ENCODE measurements at regions of chr9 and their contacts with region 1.

Region 1: GRCh38 chr9:120875954-120876841 is 790 bp downstream of the PHF19 start:
- DNase-seq: peak; percentile 96
- H3K4me3 Mint-ChIP-seq: peak overlapping the region; percentile 97
- H3K27ac Mint-ChIP-seq: peak overlapping the region; percentile 97
- H3K4me1 Mint-ChIP-seq: peaks cover 73% of the 10 kb centered on the region
- H3K27me3 Mint-ChIP-seq: no peaks in the 10 kb centered on the region

Region 2: DNA sequence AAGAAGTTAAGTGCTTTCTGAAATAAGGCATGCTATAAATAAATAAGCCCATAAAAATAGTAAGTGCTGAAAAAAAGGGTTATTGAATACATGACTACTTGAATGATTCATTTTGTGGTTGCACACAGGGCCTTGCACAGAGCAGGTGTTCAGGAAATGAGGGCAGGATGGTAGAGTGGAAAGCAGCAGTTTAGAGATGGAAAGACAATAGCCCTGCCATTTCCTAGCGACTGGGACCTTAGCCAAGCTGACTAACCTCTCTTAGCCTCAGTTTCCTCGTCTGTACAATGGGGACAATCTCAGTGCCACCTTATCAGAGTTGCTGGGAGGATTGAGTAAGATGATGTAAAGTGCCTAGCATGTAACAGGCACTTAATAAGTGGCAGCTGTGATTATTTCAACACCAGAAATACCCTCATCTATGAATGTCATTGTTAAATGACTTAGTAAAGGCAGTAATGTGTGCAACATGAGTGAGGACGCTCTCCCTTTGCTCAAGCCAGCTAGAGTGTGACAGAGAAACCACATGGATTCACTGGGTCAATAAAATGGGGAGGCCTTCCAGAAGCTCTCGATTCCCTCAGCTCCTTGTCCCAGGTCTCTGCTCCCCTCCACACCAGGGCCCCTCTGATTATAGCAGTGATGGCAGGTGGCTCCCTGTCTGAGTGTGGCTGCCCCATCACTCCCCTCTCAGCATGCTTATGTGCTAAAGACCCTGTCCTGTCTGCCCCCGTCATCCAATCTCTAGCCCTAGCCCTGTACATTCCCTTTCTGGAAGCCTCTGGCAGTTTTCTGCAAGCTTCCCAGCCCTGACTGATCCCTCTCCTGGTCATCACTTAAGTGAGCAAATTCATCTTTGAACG is 16.8 kb after region 1 on chr9:
- intact Hi-C with region 1: loop called (anchors 1 kb)
- DNase-seq: peak; percentile 90
- H3K4me3 Mint-ChIP-seq: peak overlapping the region; percentile 85
- H3K27ac Mint-ChIP-seq: peak overlapping the region; percentile 99
- H3K4me1 Mint-ChIP-seq: peaks cover 79% of the 10 kb centered on the region
- H3K27me3 Mint-ChIP-seq: no peaks in the 10 kb centered on the region

Region 3: DNA sequence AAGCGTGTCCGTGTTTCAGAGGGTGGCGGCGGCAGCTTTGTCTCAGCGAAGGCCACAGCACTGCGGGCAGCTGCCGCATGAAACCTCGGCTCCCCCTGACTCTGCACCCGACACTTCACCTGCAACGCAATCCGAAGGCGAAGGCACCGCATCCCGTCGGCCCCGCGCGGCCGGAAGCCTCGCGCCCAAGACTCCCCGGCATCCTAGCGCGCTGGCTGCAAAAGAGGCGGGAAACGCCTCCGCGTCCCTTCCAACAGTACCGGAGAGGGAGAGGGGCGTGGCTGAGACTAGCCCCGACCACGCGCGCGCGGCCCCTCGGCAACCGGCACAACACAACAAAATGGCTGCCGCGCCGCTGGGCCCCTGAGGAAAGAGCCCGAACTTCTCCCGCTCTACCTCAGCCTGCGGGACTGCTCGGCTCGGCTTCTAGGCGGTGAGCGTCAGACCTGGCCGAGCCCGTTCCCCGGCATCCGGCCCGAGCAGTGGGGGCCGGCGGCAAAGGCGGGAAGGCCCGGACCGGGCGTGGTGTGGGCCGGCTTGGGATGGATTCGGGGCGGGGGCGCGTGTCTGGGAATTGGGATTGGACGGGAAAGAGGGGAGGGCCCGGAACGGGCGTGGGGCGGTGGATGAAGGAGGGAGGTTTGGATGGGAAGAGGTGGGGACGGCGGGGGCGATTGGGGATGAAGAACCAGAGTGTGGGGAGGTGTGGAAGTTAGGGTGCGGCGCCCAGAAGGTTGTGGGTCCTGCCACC is 198.6 kb after region 1 on chr9 and contains the start of gene CNTRL:
- intact Hi-C with region 1: loop called (anchors 2 kb)
- DNase-seq: peak; percentile 97
- H3K4me3 Mint-ChIP-seq: peak within 1 kb of the TSS; percentile 100
- H3K27ac Mint-ChIP-seq: peak within 1 kb of the TSS; percentile 98
- H3K4me1 Mint-ChIP-seq: peaks cover 52% of the 10 kb centered on the region
- H3K27me3 Mint-ChIP-seq: no peaks in the 10 kb centered on the region
- total RNA-seq, gene CNTRL: 68.3 and 69.4 TPM in 2 replicates

Region 4: GRCh38 chr9:121178676-121179372 is 302.6 kb after region 1 on chr9:
- intact Hi-C with region 1: no loop called
- DNase-seq: no peak
- H3K4me3 Mint-ChIP-seq: no peak overlapping the region
- H3K27ac Mint-ChIP-seq: no peak overlapping the region
- H3K4me1 Mint-ChIP-seq: peaks cover 17% of the 10 kb centered on the region
- H3K27me3 Mint-ChIP-seq: no peaks in the 10 kb centered on the region

Measured in activated CD4-positive, alpha-beta T cell treated with anti-CD3 and anti-CD28 coated beads, Interleukin-2, amount 10 ng/mL, durations not matched to agents 24 days and 14 days (primary cell).